AG04450 (cell line): ENCODE measurements at regions of chrX and their contacts with region 1.

Region 1: GRCh38 chrX:30735839-30736238 is 82.6 kb downstream of the GK start:
- DNase-seq: peak; percentile 2
- H3K4me3 ChIP-seq: no peak overlapping the region
- H3K27ac ChIP-seq: no peak overlapping the region
- H3K27me3 ChIP-seq: no peaks in the 10 kb centered on the region
- CTCF ChIP-seq: peak; percentile 69

Region 2: DNA sequence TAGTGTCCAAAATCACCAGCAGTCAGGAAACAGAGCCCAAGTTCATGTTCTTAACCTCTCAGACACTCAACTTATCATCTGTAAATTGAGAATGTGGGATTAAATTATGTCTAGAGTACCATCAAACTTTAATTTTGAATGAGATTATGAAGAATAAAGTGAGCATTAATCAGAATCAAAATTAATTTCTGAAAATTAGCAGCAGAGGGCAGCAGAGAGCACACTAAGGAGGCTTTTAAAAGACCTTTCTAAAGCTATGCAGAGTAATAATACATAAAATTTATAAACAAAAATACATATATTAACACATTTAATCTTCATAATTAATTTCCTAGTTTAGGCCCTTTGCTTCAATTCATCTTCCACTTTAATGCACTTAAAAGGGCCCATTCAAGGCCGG is 165.3 kb before region 1 on chrX:
- CTCF ChIA-PET with region 1: interaction called, 10 read pairs
- POLR2A ChIA-PET with region 1: no interaction called
- DNase-seq: no peak
- H3K4me3 ChIP-seq: no peak overlapping the region
- H3K27ac ChIP-seq: no peak overlapping the region
- H3K27me3 ChIP-seq: no peaks in the 10 kb centered on the region
- CTCF ChIP-seq: peak; percentile 43

Region 3: DNA sequence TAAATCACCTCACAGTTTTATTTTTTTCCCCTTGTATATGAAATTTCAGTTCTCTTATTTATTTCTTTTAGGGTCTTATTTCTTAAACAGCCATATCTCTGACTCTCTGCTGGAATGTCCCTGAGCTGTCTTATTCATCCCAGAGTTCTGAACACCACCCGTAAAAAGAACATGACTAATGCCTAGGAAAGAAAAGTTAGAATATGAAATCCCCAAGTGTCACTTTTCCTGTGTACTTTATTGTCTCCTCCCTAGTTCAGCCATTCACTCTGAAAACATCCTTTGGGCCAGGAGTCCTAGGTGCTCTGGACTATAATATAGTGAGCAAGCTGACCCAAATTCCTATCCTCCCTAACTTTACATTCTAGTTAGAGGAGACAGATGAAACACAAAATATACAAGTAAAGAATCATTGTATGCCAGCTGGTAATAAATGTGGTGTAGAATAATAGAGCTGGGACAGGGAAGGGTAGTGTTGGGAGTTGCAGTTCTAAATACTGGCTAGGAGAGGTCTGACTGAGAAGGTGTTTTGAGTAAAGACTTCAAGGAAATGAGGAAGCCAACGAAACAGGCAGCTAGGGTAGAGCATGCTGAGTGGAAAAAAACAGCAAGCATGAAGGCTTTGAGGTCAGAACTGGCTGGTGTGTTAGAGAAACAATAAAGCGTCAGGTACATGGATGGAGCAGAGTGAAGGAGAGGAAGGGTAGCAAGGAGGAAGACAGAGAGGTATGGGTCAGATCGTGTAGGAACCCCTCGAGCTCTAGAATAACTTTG is 376.6 kb after region 1 on chrX:
- CTCF ChIA-PET with region 1: interaction called, 13 read pairs
- POLR2A ChIA-PET with region 1: no interaction called
- DNase-seq: no peak
- H3K4me3 ChIP-seq: no peak overlapping the region
- H3K27ac ChIP-seq: no peak overlapping the region
- H3K27me3 ChIP-seq: no peaks in the 10 kb centered on the region
- CTCF ChIP-seq: no peak